CD4-positive, alpha-beta T cell (primary cell): ENCODE measurements at regions of chr6 and their contacts with region 1.

Region 1: GRCh38 chr6:28940858-28941680 is 17.3 kb upstream of the TRIM27 start:
- DNase-seq: peak; percentile 49 to 93 (median 67)
- ATAC-seq: peak; percentile 68
- H3K4me3 ChIP-seq: peak overlapping the region; percentile 66
- H3K4me3 Mint-ChIP-seq: peak overlapping the region; percentile 92
- H3K27ac ChIP-seq: peak overlapping the region; percentile 55 to 63
- H3K27ac Mint-ChIP-seq: peak overlapping the region; percentile 92
- H3K4me1 ChIP-seq: peaks cover 42% of the 10 kb centered on the region
- H3K4me1 Mint-ChIP-seq: peaks cover 55% of the 10 kb centered on the region
- H3K27me3 ChIP-seq: no peaks in the 10 kb centered on the region
- H3K27me3 Mint-ChIP-seq: peaks cover 21% of the 10 kb centered on the region
- CTCF ChIP-seq: no peak

Region 2: GRCh38 chr6:27241443-27241842 is 1699.6 kb before region 1 on chr6:
- CTCF ChIA-PET with region 1: no interaction called
- POLR2A ChIA-PET with region 1: no interaction called
- intact Hi-C with region 1: no loop called
- DNase-seq: no peak
- ATAC-seq: no peak
- H3K4me3 ChIP-seq: no peak overlapping the region
- H3K4me3 Mint-ChIP-seq: no peak overlapping the region
- H3K27ac ChIP-seq: no peak overlapping the region
- H3K27ac Mint-ChIP-seq: no peak overlapping the region
- H3K4me1 ChIP-seq: peaks cover 10% of the 10 kb centered on the region
- H3K4me1 Mint-ChIP-seq: peaks cover 23% of the 10 kb centered on the region
- H3K27me3 ChIP-seq: peaks cover 48 to 75% of the 10 kb centered on the region in 2 experiments
- H3K27me3 Mint-ChIP-seq: peaks cover 68% of the 10 kb centered on the region
- CTCF ChIP-seq: no peak

Region 3: GRCh38 chr6:28863604-28864320 is 77.3 kb before region 1 on chr6:
- CTCF ChIA-PET with region 1: interaction called, 7 read pairs
- POLR2A ChIA-PET with region 1: interaction called, 22 read pairs
- intact Hi-C with region 1: loop called (anchors 1 kb)
- DNase-seq: peak; percentile 69 to 93 (median 80)
- ATAC-seq: peak; percentile 39
- H3K4me3 ChIP-seq: peak overlapping the region; percentile 82
- H3K4me3 Mint-ChIP-seq: peak overlapping the region; percentile 88
- H3K27ac ChIP-seq: peak overlapping the region; percentile 30 to 47
- H3K27ac Mint-ChIP-seq: peak overlapping the region; percentile 93
- H3K4me1 ChIP-seq: peaks cover 34% of the 10 kb centered on the region
- H3K4me1 Mint-ChIP-seq: peaks cover 51% of the 10 kb centered on the region
- H3K27me3 ChIP-seq: no peaks in the 10 kb centered on the region
- H3K27me3 Mint-ChIP-seq: peaks cover 7% of the 10 kb centered on the region
- CTCF ChIP-seq: peak; percentile 10

Region 4: DNA sequence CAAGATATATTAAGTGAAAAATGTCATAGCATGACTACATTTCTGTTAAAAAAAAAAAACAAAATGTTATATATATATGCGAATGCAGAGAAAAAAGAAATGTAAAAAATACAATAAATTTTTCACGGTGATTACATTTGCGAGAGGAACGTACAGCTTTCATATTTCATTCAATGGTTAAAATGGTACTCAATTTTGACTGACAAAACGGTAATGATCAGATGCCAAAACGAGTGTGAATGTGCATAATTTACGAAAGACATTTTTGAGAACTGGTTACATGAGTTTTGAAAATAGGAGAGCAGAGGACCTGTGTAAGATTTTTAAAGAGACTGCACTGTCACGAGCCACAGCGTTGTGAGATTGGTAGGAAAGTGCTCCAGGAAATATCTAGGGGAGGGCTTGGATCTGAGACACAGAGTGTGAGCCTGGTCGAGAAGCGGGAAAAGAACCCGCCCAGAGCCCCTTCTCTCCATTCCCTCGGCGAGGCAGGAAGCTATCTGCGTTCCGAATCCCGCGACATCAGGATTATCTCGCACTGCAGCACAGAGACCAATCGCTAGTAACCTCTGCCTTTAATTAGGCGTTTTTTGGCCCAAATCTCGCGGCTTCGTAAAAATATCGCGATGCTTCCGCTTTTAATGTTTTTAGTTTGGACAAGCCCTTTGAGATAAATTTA is 45.8 kb before region 1 on chr6:
- CTCF ChIA-PET with region 1: interaction called, 7 read pairs
- POLR2A ChIA-PET with region 1: interaction called, 42 read pairs
- intact Hi-C with region 1: loop called (anchors 1 to 2 kb)
- DNase-seq: peak; percentile 81 to 97 (median 88)
- ATAC-seq: peak; percentile 70
- H3K4me3 ChIP-seq: peak overlapping the region; percentile 78
- H3K4me3 Mint-ChIP-seq: peak overlapping the region; percentile 100
- H3K27ac ChIP-seq: peak overlapping the region; percentile 95 to 96
- H3K27ac Mint-ChIP-seq: peak overlapping the region; percentile 100
- H3K4me1 ChIP-seq: peaks cover 12% of the 10 kb centered on the region
- H3K4me1 Mint-ChIP-seq: peaks cover 27% of the 10 kb centered on the region
- H3K27me3 ChIP-seq: no peaks in the 10 kb centered on the region
- H3K27me3 Mint-ChIP-seq: peaks cover 14% of the 10 kb centered on the region
- CTCF ChIP-seq: no peak

Region 5: DNA sequence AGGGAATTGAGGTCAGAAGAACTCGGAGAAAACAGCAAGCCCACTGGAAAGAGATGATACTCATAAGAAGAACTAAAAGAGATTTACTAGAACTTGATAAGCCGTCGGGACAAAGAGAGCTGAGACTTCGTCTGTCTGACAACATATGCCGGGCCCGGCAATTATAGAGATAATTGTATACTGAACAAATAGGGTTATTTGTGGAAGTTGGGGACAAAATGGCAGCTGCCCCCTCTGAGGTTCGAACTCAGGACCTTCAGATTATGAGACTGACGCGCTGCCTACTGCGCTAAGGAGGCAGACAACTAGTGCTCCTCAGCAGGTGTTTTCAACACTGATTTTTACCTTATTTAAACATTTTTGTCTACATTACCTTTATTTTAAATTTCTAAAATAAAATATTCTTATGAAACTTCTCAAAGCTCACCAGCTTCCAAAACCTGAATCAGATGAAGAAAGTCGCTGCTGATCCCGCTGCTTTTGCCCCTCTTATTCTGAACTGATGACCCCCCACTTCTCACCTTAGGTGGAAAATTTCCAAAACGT is 12.0 kb after region 1 on chr6:
- CTCF ChIA-PET with region 1: no interaction called
- POLR2A ChIA-PET with region 1: interaction called, 4 read pairs
- intact Hi-C with region 1: loop called in 1 of 2 experiments (anchors 1 kb)
- DNase-seq: peak; percentile 14 to 79 (median 40)
- ATAC-seq: peak; percentile 63
- H3K4me3 ChIP-seq: peak overlapping the region; percentile 55
- H3K4me3 Mint-ChIP-seq: peak overlapping the region; percentile 84
- H3K27ac ChIP-seq: no peak overlapping the region
- H3K27ac Mint-ChIP-seq: peak overlapping the region; percentile 90
- H3K4me1 ChIP-seq: peaks cover 15% of the 10 kb centered on the region
- H3K4me1 Mint-ChIP-seq: peaks cover 30% of the 10 kb centered on the region
- H3K27me3 ChIP-seq: no peaks in the 10 kb centered on the region
- H3K27me3 Mint-ChIP-seq: peaks cover 28% of the 10 kb centered on the region
- CTCF ChIP-seq: no peak

Region 6: GRCh38 chr6:29016559-29017427 is 75.7 kb after region 1 on chr6:
- CTCF ChIA-PET with region 1: no interaction called
- POLR2A ChIA-PET with region 1: interaction called, 4 read pairs
- intact Hi-C with region 1: loop called (anchors 1 to 5 kb)
- DNase-seq: peak; percentile 71 to 91 (median 80)
- ATAC-seq: peak; percentile 66
- H3K4me3 ChIP-seq: peak overlapping the region; percentile 55
- H3K4me3 Mint-ChIP-seq: peak overlapping the region; percentile 87
- H3K27ac ChIP-seq: no peak overlapping the region
- H3K27ac Mint-ChIP-seq: peak overlapping the region; percentile 50
- H3K4me1 ChIP-seq: peaks cover 21% of the 10 kb centered on the region
- H3K4me1 Mint-ChIP-seq: peaks cover 16% of the 10 kb centered on the region
- H3K27me3 ChIP-seq: peaks cover 13 to 24% of the 10 kb centered on the region in 2 experiments
- H3K27me3 Mint-ChIP-seq: peaks cover 42% of the 10 kb centered on the region
- CTCF ChIP-seq: peak; percentile 95

Region 7: DNA sequence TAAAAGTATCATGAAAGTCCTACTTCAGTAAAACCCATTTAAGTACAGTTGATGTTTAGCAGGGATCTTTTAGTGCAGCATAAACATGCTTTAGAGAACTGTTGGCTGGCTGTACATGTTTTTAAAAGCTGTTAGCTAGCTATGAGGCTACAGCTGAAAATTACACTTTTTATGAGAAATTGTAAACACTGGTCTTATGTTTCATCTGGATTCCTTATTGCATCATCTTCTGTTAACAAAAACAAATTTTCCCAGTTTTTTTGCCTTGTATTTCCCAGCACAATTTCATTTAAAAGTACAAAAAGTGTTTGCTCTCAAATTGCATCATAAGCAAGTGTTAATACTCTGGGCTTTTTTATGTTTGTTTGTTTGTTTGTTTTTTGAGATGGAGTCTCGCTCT is 1529.9 kb after region 1 on chr6:
- CTCF ChIA-PET with region 1: no interaction called
- POLR2A ChIA-PET with region 1: no interaction called
- intact Hi-C with region 1: no loop called
- DNase-seq: no peak
- ATAC-seq: no peak
- H3K4me3 ChIP-seq: no peak overlapping the region
- H3K4me3 Mint-ChIP-seq: no peak overlapping the region
- H3K27ac ChIP-seq: no peak overlapping the region
- H3K27ac Mint-ChIP-seq: no peak overlapping the region
- H3K4me1 ChIP-seq: peaks cover 17% of the 10 kb centered on the region
- H3K4me1 Mint-ChIP-seq: peaks cover 11% of the 10 kb centered on the region
- H3K27me3 ChIP-seq: peaks cover 33 to 61% of the 10 kb centered on the region in 2 experiments
- H3K27me3 Mint-ChIP-seq: peaks cover 77% of the 10 kb centered on the region
- CTCF ChIP-seq: no peak